Ovary (tissue), 10 donors: ENCODE measurements at regions of chr1 and their contacts with region 1.

Region 1: DNA sequence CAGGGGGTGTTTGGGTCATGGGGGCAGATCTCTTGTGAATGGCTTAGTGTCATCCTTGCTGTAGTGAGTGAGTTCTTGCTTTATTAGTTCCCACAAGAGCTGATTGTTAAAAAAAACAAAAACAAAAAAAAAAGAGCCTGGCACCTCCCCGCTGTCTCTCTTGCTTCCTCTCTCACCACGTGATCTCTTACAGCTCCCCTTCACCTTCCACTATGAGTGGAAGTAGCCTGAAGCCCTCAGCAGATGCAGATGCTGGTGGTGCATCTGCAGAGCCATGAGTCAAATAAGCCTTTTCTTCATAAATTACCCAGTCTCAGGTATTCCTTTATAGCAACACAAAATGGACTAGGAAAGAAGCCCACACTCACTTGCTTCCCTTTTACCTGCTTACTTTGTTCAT is 17.2 kb upstream of the RGL1 start:
- DNase-seq: no peak
- H3K4me3 ChIP-seq: no peak overlapping the region
- H3K27ac ChIP-seq: no peak overlapping the region
- H3K4me1 ChIP-seq: peaks cover 3% of the 10 kb centered on the region
- H3K27me3 ChIP-seq: no peaks in the 10 kb centered on the region
- CTCF ChIP-seq: no peak
- EP300 ChIP-seq: no peak
- POLR2A ChIP-seq: no peak

Region 2: GRCh38 chr1:183758913-183759312 is 28.8 kb before region 1 on chr1:
- intact Hi-C with region 1: loop called in 1 of 4 experiments (anchors 1 kb)
- DNase-seq: no peak
- H3K4me3 ChIP-seq: no peak overlapping the region
- H3K27ac ChIP-seq: no peak overlapping the region
- H3K4me1 ChIP-seq: peaks cover 5% of the 10 kb centered on the region
- H3K27me3 ChIP-seq: no peaks in the 10 kb centered on the region
- CTCF ChIP-seq: no peak
- EP300 ChIP-seq: no peak
- POLR2A ChIP-seq: no peak

Region 3: GRCh38 chr1:184025242-184025675 is 237.6 kb after region 1 on chr1:
- intact Hi-C with region 1: no loop called
- DNase-seq: no peak
- H3K4me3 ChIP-seq: no peak overlapping the region
- H3K27ac ChIP-seq: no peak overlapping the region
- H3K4me1 ChIP-seq: peaks cover 2% of the 10 kb centered on the region
- H3K27me3 ChIP-seq: no peaks in the 10 kb centered on the region
- CTCF ChIP-seq: no peak
- EP300 ChIP-seq: no peak
- POLR2A ChIP-seq: no peak